SK-N-SH (cell line): ENCODE measurements at regions of chr22 and their contacts with region 1.

Region 1: GRCh38 chr22:31661851-31662656 is at the start of gene PISD:
- DNase-seq: peak; percentile 96
- H3K4me3 ChIP-seq: peak within 1 kb of the TSS; percentile 83 to 93
- H3K27ac ChIP-seq: peak within 1 kb of the TSS; percentile 62 to 71; a peak in 3 of 4 replicates
- H3K4me1 ChIP-seq: peaks cover 5 to 9% of the 10 kb centered on the region in 2 experiments; a peak in 2 of 4 replicates
- H3K27me3 ChIP-seq: no peaks in the 10 kb centered on the region
- CTCF ChIP-seq: no peak
- EP300 ChIP-seq: no peak
- RAD21 ChIP-seq: no peak
- polyA plus RNA-seq, gene PISD: 34.9 and 41.4 TPM in 2 replicates

Region 2: DNA sequence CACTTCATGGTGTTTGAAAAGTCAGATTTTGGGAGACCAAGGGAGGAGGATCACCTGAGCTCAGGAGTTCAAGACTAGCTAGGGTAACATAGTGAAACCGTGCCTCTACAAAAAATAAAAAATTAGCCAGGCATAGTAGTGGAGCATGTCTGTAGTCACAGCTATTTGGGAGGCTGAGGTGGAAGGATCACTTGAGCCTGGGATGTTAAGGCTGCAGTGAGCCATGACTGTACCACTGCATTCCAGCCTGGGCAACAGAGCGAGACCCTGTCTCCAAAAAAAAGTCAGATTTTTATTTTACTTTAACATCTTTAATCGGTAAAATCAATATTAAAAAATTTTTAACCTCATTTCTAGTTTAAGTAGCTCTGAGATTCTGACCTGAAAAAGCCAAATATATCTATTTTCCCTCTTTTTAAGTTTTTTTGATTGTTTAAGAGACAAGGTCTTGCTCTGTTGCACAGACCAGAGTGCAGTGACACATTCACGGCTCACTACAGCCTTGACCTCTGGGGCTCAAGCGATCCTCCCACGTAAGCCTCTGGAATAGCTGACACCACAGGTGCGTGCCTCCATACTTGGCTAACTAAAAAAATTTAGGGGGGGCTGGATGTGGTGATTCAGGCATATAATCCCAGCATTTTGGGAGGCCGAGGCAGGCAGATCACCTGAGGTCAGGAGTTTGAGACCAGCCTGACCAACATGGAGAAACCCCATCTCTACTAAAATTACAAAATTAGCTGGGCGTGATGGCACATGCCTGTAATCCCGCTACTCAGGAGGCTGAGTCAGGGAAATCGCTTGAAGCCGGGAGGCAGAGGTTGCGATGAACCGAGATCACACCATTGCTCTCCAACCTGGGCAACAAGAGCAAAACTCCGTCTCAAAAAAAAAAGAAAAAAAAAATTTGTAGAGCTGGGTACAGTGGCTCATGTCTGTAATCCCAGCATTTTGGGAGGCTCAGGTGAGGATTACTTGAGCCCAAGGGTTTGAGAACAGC is 117.3 kb before region 1 on chr22:
- CTCF ChIA-PET with region 1: no interaction called
- POLR2A ChIA-PET with region 1: no interaction called
- DNase-seq: no peak
- H3K4me3 ChIP-seq: no peak overlapping the region
- H3K27ac ChIP-seq: no peak overlapping the region
- H3K4me1 ChIP-seq: no peaks in the 10 kb centered on the region
- H3K27me3 ChIP-seq: no peaks in the 10 kb centered on the region
- CTCF ChIP-seq: no peak
- EP300 ChIP-seq: no peak
- RAD21 ChIP-seq: no peak

Region 3: DNA sequence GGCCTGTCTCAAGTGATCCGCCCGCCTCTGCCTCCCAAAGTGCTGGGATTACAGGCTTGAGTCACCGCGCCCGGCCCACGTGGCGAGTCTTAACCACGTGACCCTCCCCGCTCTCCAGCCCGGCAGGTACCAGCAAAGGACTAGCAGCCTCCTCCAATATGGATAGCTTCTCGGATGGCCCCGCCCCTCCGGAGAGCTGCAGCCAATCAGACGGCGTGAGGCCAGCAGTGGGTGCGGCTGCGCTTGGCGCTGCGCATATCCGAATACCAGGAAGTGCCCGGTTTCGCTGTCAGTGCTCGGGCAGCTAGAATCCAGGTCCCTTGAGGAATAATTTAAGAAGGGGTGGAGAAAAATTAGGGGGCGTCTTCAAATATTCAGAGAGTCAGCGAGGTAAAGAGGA is 14.6 kb after region 1 on chr22:
- CTCF ChIA-PET with region 1: interaction called, 21 read pairs
- POLR2A ChIA-PET with region 1: interaction called, 11 read pairs
- DNase-seq: peak; percentile 94
- H3K4me3 ChIP-seq: peak overlapping the region; percentile 47 to 49
- H3K27ac ChIP-seq: peak overlapping the region in 1 of 2 experiments; percentile 29; a peak in 1 of 4 replicates
- H3K4me1 ChIP-seq: peaks cover 2 to 13% of the 10 kb centered on the region in 2 experiments; a peak in 3 of 4 replicates
- H3K27me3 ChIP-seq: no peaks in the 10 kb centered on the region
- CTCF ChIP-seq: no peak
- EP300 ChIP-seq: no peak
- RAD21 ChIP-seq: no peak

Region 4: DNA sequence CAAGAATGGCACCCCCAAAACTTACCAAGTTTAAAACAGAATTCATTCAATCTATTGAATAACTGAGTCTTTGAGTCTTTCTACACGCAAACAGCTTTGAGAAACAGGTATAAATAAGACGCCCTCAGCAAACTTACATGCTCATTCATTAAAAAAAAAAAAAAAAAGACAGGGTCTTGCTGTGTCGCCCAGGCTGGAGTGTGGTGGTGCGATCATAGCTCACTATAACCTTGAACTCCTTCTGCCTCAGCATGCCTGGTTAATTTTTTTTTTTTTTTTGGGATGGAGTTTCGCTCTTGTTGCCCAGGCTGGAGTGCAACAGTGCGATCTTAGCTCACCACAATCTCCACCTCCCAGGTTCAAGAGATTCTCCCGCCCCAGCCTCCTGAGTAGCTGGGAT is 81.8 kb after region 1 on chr22:
- CTCF ChIA-PET with region 1: interaction called, 10 read pairs
- POLR2A ChIA-PET with region 1: no interaction called
- DNase-seq: no peak
- H3K4me3 ChIP-seq: no peak overlapping the region
- H3K27ac ChIP-seq: no peak overlapping the region
- H3K4me1 ChIP-seq: peaks cover 7% of the 10 kb centered on the region in 2 experiments; a peak in 3 of 4 replicates
- H3K27me3 ChIP-seq: no peaks in the 10 kb centered on the region
- CTCF ChIP-seq: no peak
- EP300 ChIP-seq: no peak
- RAD21 ChIP-seq: no peak

Region 5: GRCh38 chr22:31749636-31750364 is 87.7 kb after region 1 on chr22 and contains the start of gene PRR14L:
- CTCF ChIA-PET with region 1: interaction called, 21 read pairs
- POLR2A ChIA-PET with region 1: interaction called, 6 read pairs
- DNase-seq: peak; percentile 96
- H3K4me3 ChIP-seq: peak within 1 kb of the TSS; percentile 84 to 86
- H3K27ac ChIP-seq: peak within 1 kb of the TSS; percentile 73 to 86
- H3K4me1 ChIP-seq: peaks cover 12 to 31% of the 10 kb centered on the region in 2 experiments
- H3K27me3 ChIP-seq: no peaks in the 10 kb centered on the region
- CTCF ChIP-seq: no peak; the same call in 1 of the 2 replicates
- EP300 ChIP-seq: peak; percentile 85 to 86
- RAD21 ChIP-seq: peak; percentile 44; the same call in 1 of the 2 replicates
- polyA plus RNA-seq, gene PRR14L: 5.9 and 7.4 TPM in 2 replicates

Region 6: GRCh38 chr22:31790240-31790639 is 128.2 kb after region 1 on chr22:
- CTCF ChIA-PET with region 1: interaction called, 10 read pairs
- POLR2A ChIA-PET with region 1: no interaction called
- DNase-seq: no peak
- H3K4me3 ChIP-seq: no peak overlapping the region
- H3K27ac ChIP-seq: no peak overlapping the region
- H3K4me1 ChIP-seq: no peaks in the 10 kb centered on the region
- H3K27me3 ChIP-seq: no peaks in the 10 kb centered on the region
- CTCF ChIP-seq: no peak
- EP300 ChIP-seq: no peak
- RAD21 ChIP-seq: no peak

Region 7: DNA sequence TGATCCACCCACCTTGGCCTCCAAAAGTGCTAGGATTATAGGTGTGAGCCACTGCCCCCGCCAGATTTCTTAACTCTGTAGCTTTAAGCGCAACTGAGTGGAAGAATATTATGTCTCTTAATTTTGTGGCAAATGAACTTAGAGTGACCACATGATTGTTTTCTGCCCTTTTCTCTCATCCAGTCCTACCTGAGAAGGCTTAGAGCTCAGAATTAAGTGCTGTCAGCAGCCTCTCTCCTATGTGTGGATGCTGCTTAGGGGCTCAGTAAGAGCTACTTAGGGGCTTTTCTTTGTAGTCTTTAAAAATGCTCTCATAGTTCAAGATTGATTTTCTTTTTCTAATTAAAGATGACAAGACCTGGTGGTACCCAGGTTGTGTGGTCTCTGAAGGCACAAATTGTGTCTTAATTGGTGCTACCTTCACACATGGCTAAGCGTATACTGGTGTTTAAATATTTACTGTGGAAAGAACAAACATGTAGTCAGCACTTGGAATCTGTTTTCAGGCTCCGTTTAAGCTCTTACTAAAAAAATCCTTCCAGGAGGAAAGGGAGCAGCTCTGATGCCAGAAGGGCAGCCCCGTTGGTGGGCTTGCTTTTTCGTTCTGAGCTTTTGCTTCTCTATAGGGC is 151.0 kb after region 1 on chr22:
- CTCF ChIA-PET with region 1: no interaction called
- POLR2A ChIA-PET with region 1: no interaction called
- DNase-seq: no peak
- H3K4me3 ChIP-seq: no peak overlapping the region
- H3K27ac ChIP-seq: no peak overlapping the region
- H3K4me1 ChIP-seq: no peaks in the 10 kb centered on the region
- H3K27me3 ChIP-seq: no peaks in the 10 kb centered on the region
- CTCF ChIP-seq: no peak
- EP300 ChIP-seq: no peak
- RAD21 ChIP-seq: no peak